IMR-90 (cell line): ENCODE measurements at regions of chr3 and their contacts with region 1.

Region 1: GRCh38 chr3:51498876-51499738 is 708 bp downstream of the DCAF1 start:
- DNase-seq: peak; percentile 89
- ATAC-seq: peak; percentile 73
- H3K4me3 ChIP-seq: peak overlapping the region; percentile 80
- H3K27ac ChIP-seq: peak overlapping the region; percentile 84
- H3K4me1 ChIP-seq: no peaks in the 10 kb centered on the region
- H3K27me3 ChIP-seq: no peaks in the 10 kb centered on the region
- CTCF ChIP-seq: no peak
- POLR2A ChIP-seq: peak; percentile 55; the same call in 1 of the 2 replicates
- RAD21 ChIP-seq: no peak

Region 2: DNA sequence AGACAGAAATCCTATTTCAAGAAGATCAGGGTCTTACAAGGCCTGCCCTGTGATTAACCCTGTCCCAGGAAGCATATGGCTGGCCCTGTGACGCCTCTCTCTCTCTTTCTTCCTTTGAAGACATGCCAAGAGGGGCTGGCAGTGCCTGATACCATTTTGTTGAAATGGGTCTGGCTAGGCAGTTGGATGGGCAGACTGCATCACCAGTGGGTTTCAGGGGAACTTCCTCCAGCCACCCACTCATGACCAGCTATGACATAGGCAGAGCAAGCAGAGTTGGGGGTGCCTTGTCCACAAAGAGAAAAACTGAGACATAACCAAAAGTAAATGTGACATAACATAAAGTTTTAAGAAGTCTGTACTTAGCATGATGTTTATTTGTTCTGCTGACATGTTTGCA is 145.4 kb before region 1 on chr3:
- CTCF ChIA-PET with region 1: no interaction called
- POLR2A ChIA-PET with region 1: no interaction called
- dilution Hi-C with region 1: no loop called
- in situ Hi-C with region 1: no loop called
- intact Hi-C with region 1: no loop called
- DNase-seq: peak; percentile 37
- ATAC-seq: peak; percentile 50; the same call in 1 of the 2 replicates
- H3K4me3 ChIP-seq: no peak overlapping the region
- H3K27ac ChIP-seq: no peak overlapping the region
- H3K4me1 ChIP-seq: no peaks in the 10 kb centered on the region
- H3K27me3 ChIP-seq: peaks cover 6% of the 10 kb centered on the region; the same call in 1 of the 2 replicates
- CTCF ChIP-seq: no peak
- POLR2A ChIP-seq: no peak
- RAD21 ChIP-seq: no peak

Region 3: DNA sequence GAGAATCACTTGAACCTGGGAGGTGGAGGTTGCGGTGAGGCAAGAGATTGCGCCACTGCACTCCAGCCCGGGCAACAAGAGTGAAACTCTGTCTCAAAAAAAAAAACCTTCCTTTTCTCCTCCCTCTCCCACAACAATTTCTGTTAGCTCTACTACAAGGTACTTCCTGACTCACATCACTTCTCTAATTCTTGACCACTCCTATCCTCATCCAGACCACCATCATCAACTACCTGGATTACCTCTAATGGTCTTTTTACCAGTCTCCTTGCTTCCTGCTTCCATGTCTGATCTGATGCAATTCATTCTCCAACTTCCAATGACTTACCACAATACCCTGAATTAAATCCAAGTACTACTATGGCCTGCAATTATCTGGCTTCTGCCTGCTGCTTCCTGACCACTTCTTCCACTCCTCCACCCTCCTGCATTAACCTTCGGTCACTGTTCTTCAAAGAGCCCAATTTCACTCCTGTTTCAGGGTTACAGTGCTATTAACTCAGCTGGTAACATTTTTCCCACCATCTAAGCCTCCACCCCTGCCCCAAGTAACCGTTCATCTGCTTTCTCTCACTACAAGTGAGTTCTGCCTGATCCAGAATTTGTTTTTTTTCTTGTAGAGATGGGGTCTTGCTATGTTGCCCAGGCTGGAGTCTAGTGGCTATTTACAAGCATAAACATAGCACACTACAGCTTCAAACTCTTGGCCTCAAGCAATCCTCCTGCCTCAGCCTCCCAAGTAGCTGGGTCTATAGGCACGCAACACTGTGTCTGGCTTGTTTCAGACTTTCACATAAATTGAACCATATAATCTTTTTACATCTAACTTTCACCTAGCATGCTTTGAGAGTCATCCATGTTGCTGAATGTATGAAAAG is 27.1 kb before region 1 on chr3:
- CTCF ChIA-PET with region 1: interaction called, 5 read pairs
- POLR2A ChIA-PET with region 1: interaction called, 13 read pairs
- dilution Hi-C with region 1: no loop called
- in situ Hi-C with region 1: no loop called
- intact Hi-C with region 1: no loop called
- DNase-seq: no peak
- ATAC-seq: no peak
- H3K4me3 ChIP-seq: no peak overlapping the region
- H3K27ac ChIP-seq: no peak overlapping the region
- H3K4me1 ChIP-seq: no peaks in the 10 kb centered on the region
- H3K27me3 ChIP-seq: no peaks in the 10 kb centered on the region
- CTCF ChIP-seq: no peak
- POLR2A ChIP-seq: no peak
- RAD21 ChIP-seq: no peak

Region 4: GRCh38 chr3:51538459-51539290 is 39.6 kb after region 1 on chr3 and contains the start of gene RAD54L2:
- CTCF ChIA-PET with region 1: no interaction called
- POLR2A ChIA-PET with region 1: interaction called, 10 read pairs
- dilution Hi-C with region 1: no loop called
- in situ Hi-C with region 1: no loop called
- intact Hi-C with region 1: loop called (anchors 2 kb)
- DNase-seq: peak; percentile 79
- ATAC-seq: peak; percentile 90
- H3K4me3 ChIP-seq: peak within 1 kb of the TSS; percentile 63
- H3K27ac ChIP-seq: peak within 1 kb of the TSS; percentile 74
- H3K4me1 ChIP-seq: peaks cover 6% of the 10 kb centered on the region; the same call in 1 of the 2 replicates
- H3K27me3 ChIP-seq: no peaks in the 10 kb centered on the region
- CTCF ChIP-seq: peak; percentile 44
- POLR2A ChIP-seq: peak; percentile 65
- RAD21 ChIP-seq: peak; percentile 6; the same call in 1 of the 2 replicates
- total RNA-seq, gene RAD54L2: 22.2 and 24.2 TPM in 2 replicates

Region 5: DNA sequence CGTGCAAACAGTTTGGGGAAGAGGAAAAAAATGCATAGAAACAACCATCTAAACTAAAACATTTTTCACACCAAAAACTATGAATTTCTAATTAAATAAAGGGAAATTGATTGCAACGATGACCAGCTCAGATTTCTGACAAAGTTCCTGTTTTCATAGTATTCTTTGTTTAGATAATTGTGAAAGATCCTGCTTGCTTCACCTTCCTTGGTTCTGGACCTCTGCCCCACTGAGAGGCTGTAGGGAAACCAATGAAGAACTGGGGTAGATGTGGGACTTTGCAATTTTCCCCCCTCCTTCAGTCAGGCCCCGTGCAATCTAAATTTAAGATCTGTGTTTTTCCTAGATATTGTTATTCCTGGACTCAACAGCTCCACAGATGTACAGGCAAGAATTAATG is 158.1 kb after region 1 on chr3:
- CTCF ChIA-PET with region 1: no interaction called
- POLR2A ChIA-PET with region 1: interaction called, 16 read pairs
- dilution Hi-C with region 1: no loop called
- in situ Hi-C with region 1: no loop called
- intact Hi-C with region 1: no loop called
- DNase-seq: no peak
- ATAC-seq: no peak
- H3K4me3 ChIP-seq: no peak overlapping the region
- H3K27ac ChIP-seq: no peak overlapping the region
- H3K4me1 ChIP-seq: no peaks in the 10 kb centered on the region
- H3K27me3 ChIP-seq: no peaks in the 10 kb centered on the region
- CTCF ChIP-seq: no peak
- POLR2A ChIP-seq: no peak
- RAD21 ChIP-seq: no peak

Region 6: DNA sequence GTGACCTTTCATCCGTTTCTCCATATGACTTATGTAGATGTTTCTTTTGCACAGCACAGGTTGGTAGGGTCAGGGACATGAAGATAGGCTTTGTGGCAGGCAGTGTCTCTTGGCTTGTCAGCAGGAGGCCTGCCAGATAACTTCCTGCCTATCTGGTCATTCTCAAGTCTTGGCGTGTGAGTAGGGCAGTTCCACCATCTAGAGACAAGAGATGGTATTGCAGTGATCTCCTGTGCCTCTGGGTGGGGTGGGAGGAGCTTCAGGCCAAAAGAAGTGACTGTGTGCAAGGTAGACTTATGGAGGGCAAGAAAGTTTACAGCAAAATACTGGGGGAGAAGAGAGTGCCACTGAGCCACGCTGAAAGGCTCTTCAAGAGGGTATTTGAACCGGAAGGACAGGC is 183.0 kb after region 1 on chr3:
- CTCF ChIA-PET with region 1: interaction called, 34 read pairs
- POLR2A ChIA-PET with region 1: interaction called, 9 read pairs
- dilution Hi-C with region 1: no loop called
- in situ Hi-C with region 1: loop called (anchors 5 kb)
- intact Hi-C with region 1: loop called (anchors 1 kb)
- DNase-seq: peak; percentile 88
- ATAC-seq: peak; percentile 99
- H3K4me3 ChIP-seq: no peak overlapping the region
- H3K27ac ChIP-seq: no peak overlapping the region
- H3K4me1 ChIP-seq: peaks cover 3% of the 10 kb centered on the region; the same call in 1 of the 2 replicates
- H3K27me3 ChIP-seq: no peaks in the 10 kb centered on the region
- CTCF ChIP-seq: peak; percentile 92
- POLR2A ChIP-seq: no peak
- RAD21 ChIP-seq: peak; percentile 93